PC-3 (cell line): ENCODE measurements at regions of chr5 and their contacts with region 1.

Region 1: DNA sequence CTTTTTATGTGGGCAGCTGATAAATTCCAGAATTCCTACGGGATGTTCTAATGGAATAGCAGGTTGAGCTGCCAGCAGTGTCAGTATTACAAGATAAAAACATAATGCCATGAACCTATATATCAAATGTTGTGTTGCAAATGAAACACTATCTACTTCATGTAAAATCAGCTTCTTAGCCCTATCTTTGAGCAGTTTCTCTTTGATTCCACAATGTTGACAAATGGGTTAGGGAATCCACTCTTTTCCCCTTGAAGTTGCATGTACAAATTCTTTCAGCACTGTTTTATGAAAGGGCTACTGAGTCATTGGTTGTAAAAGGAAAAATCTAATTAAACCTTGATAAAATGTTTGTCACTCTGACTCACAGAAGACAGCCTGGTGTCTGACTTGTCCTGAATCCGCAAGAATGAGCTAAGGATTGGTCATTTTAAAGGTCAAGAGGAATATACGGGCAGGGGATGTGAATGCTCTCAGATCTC is 950.6 kb upstream of the NUDT12 start:
- DNase-seq: peak; percentile 97
- ATAC-seq: peak; percentile 94
- H3K4me3 ChIP-seq: peak overlapping the region; percentile 15; the same call in 1 of the 2 replicates
- H3K27ac ChIP-seq: peak overlapping the region; percentile 67
- H3K4me1 ChIP-seq: peaks cover 29% of the 10 kb centered on the region
- H3K27me3 ChIP-seq: no peaks in the 10 kb centered on the region
- CTCF ChIP-seq: no peak

Region 2: DNA sequence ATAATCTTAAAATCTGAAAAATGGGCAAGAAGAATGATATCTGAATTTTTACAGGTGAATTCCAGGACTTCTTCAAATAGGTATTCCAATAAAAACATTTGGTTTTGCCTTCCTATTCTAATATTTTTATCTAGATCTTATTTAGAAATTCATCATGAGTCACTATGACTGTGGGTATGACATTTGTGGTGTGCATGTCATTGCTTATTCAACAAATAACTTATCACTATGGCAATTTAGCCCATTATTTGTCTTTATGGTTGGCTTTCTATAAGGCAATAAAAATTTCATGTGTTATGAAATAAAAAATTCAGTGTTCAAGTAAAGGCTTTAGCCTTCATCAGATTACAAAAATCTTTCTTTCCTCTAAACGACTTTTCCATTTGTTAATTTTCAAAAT is 189.1 kb after region 1 on chr5:
- CTCF ChIA-PET with region 1: no interaction called
- POLR2A ChIA-PET with region 1: no interaction called
- intact Hi-C with region 1: loop called (anchors 1 kb)
- DNase-seq: peak; percentile 95
- ATAC-seq: peak; percentile 77
- H3K4me3 ChIP-seq: 0 out of 2 replicates have a peak overlapping the region, but pooled peaks have one; percentile 12
- H3K27ac ChIP-seq: peak overlapping the region; percentile 88
- H3K4me1 ChIP-seq: peaks cover 35% of the 10 kb centered on the region
- H3K27me3 ChIP-seq: no peaks in the 10 kb centered on the region
- CTCF ChIP-seq: no peak

Region 3: DNA sequence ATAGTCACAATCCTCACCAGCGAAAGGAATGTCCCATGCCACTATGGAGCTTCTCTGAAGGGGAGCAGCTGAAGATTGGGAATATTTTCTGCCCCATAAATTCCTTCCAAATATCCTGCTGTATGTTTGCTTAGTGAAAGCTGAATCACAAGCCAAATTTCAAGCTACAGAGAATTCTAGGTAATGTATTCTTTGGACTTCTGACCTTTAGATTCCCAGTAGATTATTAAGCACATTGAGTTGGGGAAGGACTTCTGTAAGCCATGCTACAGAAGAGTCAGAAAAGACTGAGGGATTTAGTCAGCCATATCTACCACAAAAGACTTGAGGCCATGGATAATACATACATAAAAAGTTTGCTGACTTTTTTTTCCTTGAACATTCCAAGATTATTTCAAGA is 391.4 kb after region 1 on chr5:
- CTCF ChIA-PET with region 1: no interaction called
- POLR2A ChIA-PET with region 1: no interaction called
- intact Hi-C with region 1: loop called (anchors 1 kb)
- DNase-seq: peak; percentile 91
- ATAC-seq: peak; percentile 94
- H3K4me3 ChIP-seq: no peak overlapping the region
- H3K27ac ChIP-seq: peak overlapping the region; percentile 58
- H3K4me1 ChIP-seq: peaks cover 31% of the 10 kb centered on the region
- H3K27me3 ChIP-seq: no peaks in the 10 kb centered on the region
- CTCF ChIP-seq: no peak

Region 4: DNA sequence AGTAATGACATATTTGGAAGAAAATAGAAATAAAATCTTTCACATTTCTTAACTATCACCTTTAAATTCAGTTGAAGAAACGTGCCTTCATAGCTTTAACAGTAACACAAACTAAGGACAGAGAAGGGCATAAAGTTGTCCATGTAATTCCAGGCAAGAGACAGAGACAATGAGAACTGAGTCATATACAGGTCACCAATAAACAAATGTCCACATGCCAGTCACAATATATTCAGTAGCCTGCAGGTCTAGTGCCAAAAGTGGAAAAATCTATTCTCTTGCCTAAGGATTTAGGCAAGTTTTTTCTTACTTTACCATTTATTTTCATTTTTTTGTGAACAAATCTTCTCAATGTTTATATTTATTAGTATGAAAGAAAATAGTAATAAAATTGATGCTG is 760.9 kb after region 1 on chr5:
- CTCF ChIA-PET with region 1: no interaction called
- POLR2A ChIA-PET with region 1: no interaction called
- intact Hi-C with region 1: no loop called
- DNase-seq: peak; percentile 59
- ATAC-seq: peak; percentile 96
- H3K4me3 ChIP-seq: no peak overlapping the region
- H3K27ac ChIP-seq: no peak overlapping the region
- H3K4me1 ChIP-seq: no peaks in the 10 kb centered on the region; the same call in 1 of the 2 replicates
- H3K27me3 ChIP-seq: no peaks in the 10 kb centered on the region
- CTCF ChIP-seq: no peak